ENCODE measurements at regions of chr15 and their contacts with region 1.

Region 1: DNA sequence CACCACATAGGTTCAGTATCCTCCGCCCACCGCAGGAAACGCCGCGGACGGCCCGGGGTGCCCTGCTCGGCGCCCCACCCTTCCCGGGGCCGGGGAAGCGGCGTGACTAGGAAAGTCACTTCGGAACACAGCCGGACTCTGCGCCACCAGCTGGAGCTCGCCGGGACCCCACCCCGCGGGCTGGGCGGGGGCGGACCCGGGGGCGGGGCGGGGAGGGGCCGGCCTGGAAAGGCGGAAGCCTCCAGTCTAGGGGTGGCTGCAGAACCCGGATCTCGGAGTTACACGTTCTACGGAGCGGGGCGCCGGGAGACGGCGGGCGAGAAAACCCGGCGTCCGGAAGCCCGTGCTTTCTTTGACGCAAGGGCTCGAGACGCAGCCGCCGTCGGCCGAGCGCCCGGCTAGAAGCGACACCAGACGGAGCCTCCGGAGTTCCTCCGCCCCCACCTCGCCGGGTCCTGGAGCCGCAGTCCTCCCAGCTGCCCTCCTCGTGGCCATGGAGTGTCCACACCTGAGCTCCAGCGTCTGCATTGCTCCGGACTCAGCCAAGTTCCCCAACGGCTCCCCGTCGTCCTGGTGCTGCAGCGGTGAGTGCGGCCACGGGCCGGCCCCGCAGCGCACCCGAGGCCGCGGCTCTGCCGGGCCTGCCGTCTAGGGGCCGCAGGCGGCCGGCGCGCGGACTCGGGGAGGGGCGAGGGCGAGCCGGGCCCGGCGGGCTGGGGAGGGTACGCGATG is at the start of gene USP3:
- H3K4me3 Mint-ChIP-seq: peak within 1 kb of the TSS; percentile 88
- H3K27ac Mint-ChIP-seq: no peak within 1 kb of the TSS
- H3K4me1 Mint-ChIP-seq: peaks cover 65% of the 10 kb centered on the region
- H3K27me3 Mint-ChIP-seq: no peaks in the 10 kb centered on the region

Region 2: DNA sequence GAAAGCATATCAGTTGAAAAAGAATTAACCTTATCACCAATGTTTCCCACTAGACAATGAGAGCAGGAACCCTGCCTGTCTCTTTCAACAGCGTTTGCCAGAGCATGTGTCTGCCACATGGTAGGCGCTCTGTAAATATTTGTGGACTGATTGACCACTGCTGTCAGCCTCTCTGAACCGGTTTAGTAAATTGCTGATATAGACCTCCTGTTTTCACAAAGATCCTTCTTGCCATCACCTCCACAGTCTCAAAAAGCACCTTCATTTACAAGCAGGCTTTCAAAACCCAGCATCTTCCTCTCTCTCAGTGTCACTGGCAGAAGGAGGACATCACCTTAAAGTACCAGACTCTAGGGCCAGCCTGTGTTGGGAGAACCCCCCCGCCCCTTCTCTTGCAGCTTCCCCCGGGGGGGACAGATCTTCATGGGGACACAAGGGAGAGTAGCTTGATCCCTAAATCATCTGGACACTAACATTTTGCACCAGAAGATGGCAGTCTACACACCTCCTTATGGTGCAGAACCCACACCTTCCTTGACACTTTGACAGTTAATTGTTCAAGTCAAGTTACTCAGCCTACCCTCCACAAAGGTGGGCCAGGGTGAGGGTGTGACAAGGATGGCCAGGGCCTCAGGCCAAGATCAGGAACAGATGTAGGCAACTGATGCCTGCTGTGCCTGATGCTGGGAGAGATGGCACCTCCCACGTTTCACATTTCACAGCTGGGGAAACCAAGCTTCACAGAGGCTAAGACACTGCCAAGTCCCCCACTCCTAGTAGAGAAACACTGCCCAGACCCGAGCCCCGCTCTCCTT is 37.8 kb before region 1 on chr15:
- intact Hi-C with region 1: loop called (anchors 2 kb)
- H3K4me3 Mint-ChIP-seq: no peak overlapping the region
- H3K27ac Mint-ChIP-seq: peak overlapping the region; percentile 47
- H3K4me1 Mint-ChIP-seq: peaks cover 16% of the 10 kb centered on the region
- H3K27me3 Mint-ChIP-seq: no peaks in the 10 kb centered on the region

Region 3: DNA sequence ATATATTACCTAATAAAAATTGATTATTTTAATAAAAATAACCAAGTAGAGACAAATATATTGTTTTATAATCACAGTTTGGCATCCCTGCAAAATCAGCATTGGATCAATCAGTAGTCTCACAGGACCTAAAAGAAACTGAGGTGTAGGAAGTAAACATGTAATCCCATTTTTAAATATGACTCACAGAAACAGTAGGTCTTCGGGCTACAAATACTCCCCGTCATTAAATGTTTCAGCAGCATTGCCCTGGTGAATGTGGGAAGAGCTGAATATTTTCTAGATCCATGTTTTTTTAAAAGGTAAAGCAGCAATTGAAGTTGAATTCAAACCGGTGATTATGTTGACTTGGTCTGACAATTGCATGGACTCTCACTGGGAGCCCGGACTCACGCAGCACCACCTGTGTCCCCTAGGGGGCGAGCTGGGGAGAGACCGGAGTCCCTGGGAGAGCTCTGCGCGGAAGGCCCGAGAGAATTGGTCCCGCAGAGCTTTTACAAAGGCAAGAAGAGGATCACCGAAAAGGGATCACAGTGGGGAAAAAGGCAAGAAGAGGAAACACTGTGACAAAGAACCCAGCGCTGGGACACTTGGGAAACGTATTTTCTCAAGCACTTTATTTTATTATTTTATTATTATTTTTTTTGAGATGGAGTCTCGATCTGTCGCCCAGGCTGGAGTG is 17.2 kb before region 1 on chr15:
- intact Hi-C with region 1: loop called (anchors 1 kb)
- H3K4me3 Mint-ChIP-seq: peak overlapping the region; percentile 13
- H3K27ac Mint-ChIP-seq: peak overlapping the region; percentile 98
- H3K4me1 Mint-ChIP-seq: peaks cover 69% of the 10 kb centered on the region
- H3K27me3 Mint-ChIP-seq: no peaks in the 10 kb centered on the region

Region 4: DNA sequence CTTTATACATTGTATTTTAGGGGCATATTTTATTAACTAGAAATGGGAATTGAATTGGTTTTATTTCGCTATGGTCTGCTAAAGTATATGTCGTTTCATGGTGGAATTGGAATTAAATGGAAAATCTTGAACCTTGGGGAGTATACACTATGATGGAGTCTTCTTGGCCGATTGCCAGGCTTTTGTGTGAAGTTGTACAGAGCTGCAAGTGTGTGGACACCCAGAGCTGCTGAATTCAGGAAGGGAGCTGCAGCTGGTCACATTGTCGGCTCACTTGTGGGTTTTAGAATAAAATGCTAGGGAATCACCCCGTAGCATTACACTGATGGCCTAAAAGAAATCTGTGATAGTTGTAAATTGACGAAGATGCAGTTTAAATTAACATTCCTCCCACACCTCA is 35.1 kb after region 1 on chr15:
- intact Hi-C with region 1: loop called (anchors 5 kb)
- H3K4me3 Mint-ChIP-seq: no peak overlapping the region
- H3K27ac Mint-ChIP-seq: no peak overlapping the region
- H3K4me1 Mint-ChIP-seq: peaks cover 54% of the 10 kb centered on the region
- H3K27me3 Mint-ChIP-seq: no peaks in the 10 kb centered on the region

Region 5: DNA sequence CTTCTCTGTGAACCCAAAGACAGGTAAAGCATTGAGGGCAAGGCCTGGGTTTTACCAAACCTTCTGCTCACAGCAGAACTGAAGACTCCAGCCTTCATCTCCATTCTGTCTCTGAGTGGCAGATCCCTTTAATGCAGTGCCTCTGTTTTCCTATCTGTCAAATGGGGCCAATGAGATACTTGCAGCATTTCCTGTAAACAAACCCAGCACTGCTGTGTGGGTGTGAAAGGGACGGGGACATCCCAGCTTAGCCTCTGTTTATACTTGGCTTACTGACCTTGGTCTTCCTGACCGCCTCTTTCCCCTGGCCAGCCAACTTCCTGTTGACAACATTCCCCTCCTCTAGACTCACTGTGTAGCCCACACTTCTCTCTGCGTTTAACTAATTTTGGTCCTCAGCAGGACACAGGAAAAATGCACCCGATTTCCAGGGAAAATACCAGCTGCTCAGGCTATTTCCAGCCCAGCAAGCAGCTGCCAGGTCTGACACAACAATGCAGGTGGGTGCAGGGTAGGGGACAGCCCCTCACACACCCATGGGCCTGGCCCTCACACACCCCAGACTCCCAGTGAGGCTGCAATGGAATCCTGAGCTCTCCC is 435.2 kb after region 1 on chr15:
- intact Hi-C with region 1: no loop called
- H3K4me3 Mint-ChIP-seq: no peak overlapping the region
- H3K27ac Mint-ChIP-seq: peak overlapping the region; percentile 24
- H3K4me1 Mint-ChIP-seq: peaks cover 30% of the 10 kb centered on the region
- H3K27me3 Mint-ChIP-seq: peaks cover 6% of the 10 kb centered on the region